ENCODE measurements at regions of chr5 and their contacts with region 1.

Region 1: DNA sequence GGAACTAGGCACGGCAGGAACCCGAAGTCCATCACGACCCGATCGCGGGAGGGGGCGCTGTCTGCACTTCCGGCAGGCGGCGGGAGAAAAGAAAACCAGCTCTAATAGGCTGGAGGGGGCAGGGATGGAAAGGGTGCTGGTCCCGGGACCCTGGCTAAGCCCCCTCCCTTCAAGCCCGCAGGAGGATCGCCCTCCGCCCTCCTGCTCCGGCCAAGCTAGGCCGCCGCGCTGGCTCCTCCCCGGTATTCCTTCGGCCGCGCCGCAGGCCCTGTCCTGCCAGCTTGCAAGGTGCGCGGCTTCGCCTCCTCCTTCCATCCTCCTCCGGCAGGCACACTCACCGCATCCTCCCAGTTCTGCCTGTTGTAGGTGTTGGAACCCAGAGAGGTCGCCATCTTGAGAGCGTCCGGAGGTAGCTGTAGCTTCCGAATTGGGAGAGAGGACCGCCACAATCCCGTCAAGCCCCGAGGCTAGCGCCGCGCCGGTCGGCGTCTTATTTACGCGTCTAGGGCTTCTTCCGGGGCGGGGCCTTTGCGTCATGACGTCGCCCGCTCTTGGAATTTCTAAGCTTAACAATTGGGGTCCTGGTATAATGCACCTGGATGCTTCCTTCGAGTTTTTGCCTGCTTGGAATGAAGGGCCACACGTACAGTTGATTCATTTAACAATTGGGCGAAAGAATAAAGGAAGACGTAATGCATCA is at the start of gene RBM22:
- DNase-seq: peak; percentile 93
- H3K4me3 Mint-ChIP-seq: no peak within 1 kb of the TSS
- H3K27ac Mint-ChIP-seq: no peak within 1 kb of the TSS
- H3K4me1 Mint-ChIP-seq: peaks cover 9% of the 10 kb centered on the region
- H3K27me3 Mint-ChIP-seq: no peaks in the 10 kb centered on the region
- total RNA-seq, gene RBM22: 66.8 to 70.7 TPM

Region 2: GRCh38 chr5:149887622-149888183 is 813.0 kb before region 1 on chr5:
- CTCF ChIA-PET with region 1: no interaction called
- POLR2A ChIA-PET with region 1: no interaction called
- DNase-seq: no peak
- H3K4me3 Mint-ChIP-seq: no peak overlapping the region
- H3K27ac Mint-ChIP-seq: no peak overlapping the region
- H3K4me1 Mint-ChIP-seq: no peaks in the 10 kb centered on the region
- H3K27me3 Mint-ChIP-seq: peaks cover 4% of the 10 kb centered on the region

Region 3: DNA sequence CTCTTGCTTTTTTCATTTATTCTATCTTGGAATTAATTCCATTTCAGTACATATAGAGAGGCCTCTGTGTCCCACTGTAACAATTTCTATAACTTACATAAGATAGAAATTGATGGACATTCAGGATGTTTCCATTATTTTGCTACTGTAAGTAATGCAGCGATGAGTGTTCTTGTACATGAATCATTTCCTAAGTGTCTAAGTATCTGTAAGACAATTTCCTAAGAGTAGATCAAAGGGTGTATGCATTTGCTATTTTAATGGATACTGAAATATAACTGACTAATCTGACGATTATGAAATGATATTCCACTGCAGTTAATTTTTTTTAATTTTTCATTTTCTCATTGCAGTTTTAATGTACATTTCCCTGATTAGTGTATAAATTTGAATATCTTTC is 23.1 kb after region 1 on chr5:
- CTCF ChIA-PET with region 1: interaction called, 13 read pairs
- POLR2A ChIA-PET with region 1: interaction called, 11 read pairs
- DNase-seq: no peak
- H3K4me3 Mint-ChIP-seq: no peak overlapping the region
- H3K27ac Mint-ChIP-seq: no peak overlapping the region
- H3K4me1 Mint-ChIP-seq: no peaks in the 10 kb centered on the region
- H3K27me3 Mint-ChIP-seq: no peaks in the 10 kb centered on the region

Region 4: DNA sequence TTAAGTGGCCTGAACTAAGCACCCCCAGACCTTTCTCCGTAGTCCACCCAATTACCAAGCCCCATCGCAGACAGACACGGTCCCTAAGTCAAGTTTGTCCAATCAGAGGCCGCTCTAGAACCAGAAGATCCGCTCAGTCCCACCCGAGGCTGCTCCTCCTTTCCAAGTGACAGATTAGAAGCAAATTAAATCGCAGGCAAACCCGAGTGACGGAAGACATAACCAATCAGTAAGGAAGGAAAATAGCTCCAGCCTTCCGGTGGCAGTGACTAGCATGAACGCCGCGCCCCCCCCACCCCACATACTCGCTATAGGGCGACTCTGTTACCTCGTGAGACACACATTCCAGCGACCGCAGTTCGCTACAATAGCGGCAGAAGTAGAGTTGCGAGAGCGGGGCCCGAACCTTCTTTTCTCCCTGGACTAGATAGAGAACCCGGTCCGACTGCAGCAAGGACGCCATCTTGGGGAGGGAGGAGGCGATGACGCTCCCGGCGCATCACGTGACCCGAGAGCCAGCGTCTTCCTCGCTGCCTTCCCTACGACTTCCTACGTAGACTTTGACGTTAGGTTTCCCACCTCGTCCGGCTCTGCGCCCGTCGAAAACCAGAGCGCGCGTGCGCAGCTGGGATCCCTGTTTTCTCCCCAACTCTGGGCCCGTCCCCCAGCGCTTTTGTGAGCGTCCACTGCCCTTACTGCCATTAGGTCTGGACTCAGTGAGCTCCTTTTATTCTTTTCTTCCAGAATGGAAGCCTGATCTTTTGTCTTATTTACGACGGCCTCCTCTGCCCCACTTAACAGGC is 58.0 kb after region 1 on chr5 and contains the start of gene DCTN4:
- CTCF ChIA-PET with region 1: interaction called, 16 read pairs
- POLR2A ChIA-PET with region 1: interaction called, 28 read pairs
- DNase-seq: peak; percentile 93
- H3K4me3 Mint-ChIP-seq: no peak within 1 kb of the TSS
- H3K27ac Mint-ChIP-seq: no peak within 1 kb of the TSS
- H3K4me1 Mint-ChIP-seq: peaks cover 37% of the 10 kb centered on the region
- H3K27me3 Mint-ChIP-seq: no peaks in the 10 kb centered on the region
- total RNA-seq, gene DCTN4: 38.6 to 40.6 TPM

Region 5: DNA sequence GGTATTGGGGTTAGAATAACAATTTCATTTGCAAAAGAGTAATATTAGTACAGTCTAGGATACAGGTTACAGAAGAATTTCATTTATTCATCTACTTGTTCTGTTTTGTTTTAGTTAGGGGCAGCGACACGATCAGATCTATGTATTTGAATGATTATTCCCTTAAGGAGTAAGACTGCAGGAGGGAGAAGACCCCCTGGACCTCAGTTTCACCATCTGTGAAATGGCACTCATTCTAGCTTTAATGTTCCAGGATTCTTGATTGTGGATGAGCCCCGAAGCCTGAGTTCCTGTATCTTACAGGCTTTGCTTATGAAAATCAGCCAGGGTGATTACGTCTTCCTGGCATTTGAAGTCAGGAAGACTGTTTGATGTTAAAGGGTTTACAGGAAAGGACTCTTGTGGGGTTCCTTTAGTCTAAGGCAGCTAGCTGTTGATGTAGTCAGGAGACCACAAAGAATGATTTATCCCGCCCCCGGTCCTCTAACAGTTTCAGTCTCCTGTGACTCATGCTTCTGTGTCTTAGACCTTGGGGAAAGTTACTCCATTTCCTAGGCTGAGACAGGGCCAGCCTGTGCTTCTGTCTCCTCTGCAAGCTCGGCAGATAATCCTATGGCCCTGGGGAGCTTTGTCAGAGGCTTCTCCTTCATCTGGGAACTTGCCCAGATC is 89.3 kb after region 1 on chr5:
- CTCF ChIA-PET with region 1: interaction called, 10 read pairs
- POLR2A ChIA-PET with region 1: interaction called, 6 read pairs
- DNase-seq: peak; percentile 70
- H3K4me3 Mint-ChIP-seq: peak overlapping the region; percentile 40
- H3K27ac Mint-ChIP-seq: peak overlapping the region; percentile 71
- H3K4me1 Mint-ChIP-seq: peaks cover 45% of the 10 kb centered on the region
- H3K27me3 Mint-ChIP-seq: no peaks in the 10 kb centered on the region

Measured in activated CD4-positive, alpha-beta memory T cell treated with anti-CD3 and anti-CD28 coated beads, Interleukin-2, amount 10 ng/mL, durations not matched to agents 7 days and 5 days (primary cell).